Right ventricle myocardium superior (tissue), 1 donor: ENCODE measurements at regions of chr18 and their contacts with region 1.

Region 1: GRCh38 chr18:45690975-45691815 is 32.8 kb upstream of the SLC14A1 start:
- DNase-seq: peak; percentile 80
- ATAC-seq: peak; percentile 91

Region 2: DNA sequence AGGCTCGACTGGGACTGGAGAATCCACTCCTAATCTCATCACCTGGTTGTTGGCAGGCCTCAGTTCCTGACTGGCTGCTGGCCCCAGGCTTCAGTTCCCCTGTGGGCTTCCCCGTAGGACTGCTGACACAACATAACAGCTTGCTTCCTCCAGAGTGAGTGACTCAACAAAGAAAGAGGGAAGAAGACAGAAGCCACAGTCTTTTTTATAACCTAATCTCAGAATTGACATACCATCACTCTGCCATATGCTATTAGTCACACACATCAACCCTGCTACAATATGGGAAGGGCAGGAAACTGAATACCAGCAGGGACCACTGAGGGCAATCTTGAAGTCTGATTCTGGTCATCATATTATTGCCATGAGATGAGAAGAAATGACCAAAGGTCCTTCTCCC is 152.8 kb before region 1 on chr18:
- intact Hi-C with region 1: no loop called
- DNase-seq: no peak
- ATAC-seq: no peak

Region 3: DNA sequence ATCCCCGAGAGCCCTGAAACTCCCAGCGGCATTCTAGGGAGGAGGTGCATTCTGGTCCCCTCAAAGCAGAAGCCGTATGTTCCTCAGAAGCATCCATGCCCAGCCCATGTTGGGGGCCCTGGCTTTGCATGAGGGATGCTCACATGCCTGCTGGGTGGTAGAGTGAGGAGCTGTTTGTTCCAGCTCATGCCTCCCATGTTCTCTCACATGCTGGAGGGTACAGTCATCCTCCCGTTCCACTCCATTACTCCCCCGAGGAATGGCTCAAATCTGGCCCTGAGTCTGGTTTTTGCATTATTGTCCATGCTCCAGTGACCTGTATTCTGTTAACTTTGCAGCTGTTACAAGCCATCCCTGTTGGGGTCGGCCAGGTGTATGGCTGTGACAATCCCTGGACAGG is 51.8 kb before region 1 on chr18:
- intact Hi-C with region 1: no loop called
- DNase-seq: no peak
- ATAC-seq: no peak

Region 4: DNA sequence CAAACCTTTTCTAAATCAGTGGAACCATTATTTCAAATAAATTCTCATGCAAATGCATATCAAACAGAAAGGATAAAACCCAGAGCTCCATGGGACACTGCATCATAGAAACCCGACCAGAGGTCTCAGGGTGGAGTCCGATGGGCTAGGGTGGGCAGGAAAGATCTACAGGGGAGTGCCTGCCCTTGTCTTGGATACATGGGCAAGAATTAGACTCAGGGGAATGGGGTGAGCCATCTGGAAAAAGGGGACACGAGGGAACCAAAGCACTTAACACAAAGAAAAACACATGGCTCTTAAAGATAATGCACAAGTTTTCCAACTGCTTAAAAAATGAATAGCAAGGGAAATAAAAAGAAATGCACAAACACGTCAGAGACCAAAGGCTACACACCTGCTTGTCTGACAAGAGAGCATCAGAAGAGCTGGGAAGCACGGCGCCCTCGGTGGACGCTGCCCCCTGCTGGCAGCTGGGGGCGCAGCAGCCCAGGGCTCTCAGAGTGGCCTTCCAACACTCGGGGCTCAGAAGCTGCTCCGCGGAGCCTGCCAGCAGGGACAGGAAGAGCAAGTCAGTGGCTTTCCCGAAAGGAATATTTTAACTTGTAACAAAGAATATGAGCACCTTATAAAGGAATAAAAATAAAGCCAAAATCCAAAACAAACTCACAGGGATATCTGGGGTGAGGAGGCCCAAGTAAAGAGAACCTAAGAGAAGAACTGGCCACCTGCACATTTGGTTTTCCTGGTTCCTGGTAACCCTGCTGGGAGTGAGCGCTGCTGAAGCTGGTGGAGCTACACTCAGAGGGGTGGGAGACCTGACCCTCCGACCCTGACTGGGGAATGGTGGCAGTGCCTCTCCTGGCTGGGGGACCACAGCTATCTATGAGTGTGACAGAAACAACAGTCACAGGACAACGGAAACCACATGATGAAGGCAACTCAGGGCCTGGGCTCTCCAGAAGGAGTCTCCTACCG is 188.8 kb after region 1 on chr18:
- intact Hi-C with region 1: loop called (anchors 1 kb)
- DNase-seq: peak; percentile 82
- ATAC-seq: peak; percentile 97

Region 5: GRCh38 chr18:45974088-45974536 is 282.9 kb after region 1 on chr18:
- intact Hi-C with region 1: loop called (anchors 5 kb)
- DNase-seq: peak; percentile 51
- ATAC-seq: peak; percentile 89